ENCODE measurements at regions of chr18 and their contacts with region 1.

Region 1: GRCh38 chr18:24488824-24489493 is 28.5 kb downstream of the HRH4 start:
- DNase-seq: no peak

Region 2: GRCh38 chr18:23340656-23341055 is 1148.3 kb before region 1 on chr18:
- intact Hi-C with region 1: no loop called
- DNase-seq: no peak

Region 3: GRCh38 chr18:24176727-24177416 is 312.1 kb before region 1 on chr18:
- intact Hi-C with region 1: loop called (anchors 10 kb)
- DNase-seq: no peak

Region 4: DNA sequence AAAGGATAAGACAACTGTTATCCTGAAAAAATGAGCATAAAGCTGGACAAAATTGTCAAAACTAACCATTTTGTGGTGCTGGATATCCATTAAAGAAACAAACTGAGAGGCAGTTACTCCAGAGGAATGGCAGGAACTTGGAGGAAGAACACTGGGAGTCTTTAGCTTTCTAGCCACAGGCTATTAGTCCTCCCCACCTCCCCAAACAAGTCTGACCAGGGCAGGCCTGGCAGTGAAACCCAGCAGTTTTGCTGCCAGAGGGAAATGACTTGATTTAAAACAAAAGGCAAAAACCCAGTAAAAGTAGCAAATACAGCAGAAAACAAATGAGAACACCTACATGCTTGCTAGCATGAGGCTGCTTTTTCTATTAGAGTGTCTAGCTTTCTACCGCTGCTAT is 126.2 kb before region 1 on chr18:
- intact Hi-C with region 1: loop called (anchors 2 kb)
- DNase-seq: no peak

Region 5: GRCh38 chr18:24388957-24389356 is 100.0 kb before region 1 on chr18:
- intact Hi-C with region 1: no loop called
- DNase-seq: no peak

Region 6: GRCh38 chr18:24659827-24660720 is 171.1 kb after region 1 on chr18:
- intact Hi-C with region 1: no loop called
- DNase-seq: no peak

Region 7: DNA sequence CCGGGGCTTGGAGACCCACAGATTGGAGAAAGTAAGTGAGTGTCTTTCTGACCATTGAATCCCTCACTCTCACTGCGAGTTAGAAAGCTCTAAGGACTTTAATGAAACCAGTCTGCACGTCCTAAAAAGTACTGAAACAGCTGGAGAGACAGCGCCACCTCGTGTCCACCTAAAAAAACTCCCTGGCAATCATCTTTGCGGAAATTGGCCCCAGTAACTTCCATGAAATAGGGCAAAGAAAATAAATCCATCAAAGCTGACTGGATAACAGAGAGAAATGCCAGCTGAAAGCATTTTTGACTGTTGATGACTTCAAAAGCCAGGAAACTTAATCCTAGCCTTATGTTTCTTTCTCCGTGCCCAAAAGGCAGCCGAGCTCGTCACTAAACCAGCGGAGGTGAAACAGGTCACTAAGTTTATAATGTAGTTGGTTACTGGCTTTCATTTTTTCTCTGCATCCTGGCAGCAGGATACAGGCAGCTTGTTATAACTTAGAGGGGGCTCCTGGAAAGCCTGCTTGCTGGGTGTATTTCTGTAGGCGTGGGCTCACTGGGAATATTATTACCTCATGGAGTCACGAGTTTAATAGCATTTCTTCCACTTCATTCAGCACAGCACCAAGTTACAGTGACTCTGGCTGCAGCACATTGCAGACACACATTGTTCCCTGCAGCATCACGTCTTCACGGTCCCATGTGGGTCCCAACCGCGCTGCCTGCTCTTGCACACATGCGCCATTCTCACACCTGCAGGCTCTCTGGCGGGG is 238.0 kb after region 1 on chr18:
- intact Hi-C with region 1: loop called (anchors 5 kb)
- DNase-seq: no peak